Naive thymus-derived CD4-positive, alpha-beta T cell (primary cell): ENCODE measurements at regions of chr13 and their contacts with region 1.

Region 1: GRCh38 chr13:31044377-31045285 is 112.2 kb downstream of the TEX26 start:
- DNase-seq: peak; percentile 54 to 79 (median 75)
- ATAC-seq: peak; percentile 95
- H3K4me3 ChIP-seq: no peak overlapping the region
- H3K4me3 Mint-ChIP-seq: peak overlapping the region in 9 of 10 donors; percentile 19 to 81 (median 52)
- H3K27ac ChIP-seq: no peak overlapping the region
- H3K27ac Mint-ChIP-seq: peak overlapping the region in 5 of 9 donors; percentile 7 to 90 (median 46)
- H3K4me1 ChIP-seq: peaks cover 22 to 30% of the 10 kb centered on the region in 2 donors
- H3K4me1 Mint-ChIP-seq: peaks cover 22 to 52% (median 40%) of the 10 kb centered on the region in 7 donors
- H3K27me3 ChIP-seq: no peaks in the 10 kb centered on the region
- H3K27me3 Mint-ChIP-seq: peaks cover 0 to 24% (median 5%) of the 10 kb centered on the region in 5 donors

Region 2: GRCh38 chr13:30673669-30674521 is 370.7 kb before region 1 on chr13:
- CTCF ChIA-PET with region 1: no interaction called
- POLR2A ChIA-PET with region 1: no interaction called
- intact Hi-C with region 1: loop called (anchors 1 to 5 kb)
- DNase-seq: peak; percentile 79 to 94 (median 86)
- ATAC-seq: peak; percentile 97
- H3K4me3 ChIP-seq: peak overlapping the region; percentile 67
- H3K4me3 Mint-ChIP-seq: peak overlapping the region; percentile 72 to 90 (median 88)
- H3K27ac ChIP-seq: peak overlapping the region; percentile 38
- H3K27ac Mint-ChIP-seq: peak overlapping the region; percentile 81 to 98 (median 91)
- H3K4me1 ChIP-seq: peaks cover 0 to 5% of the 10 kb centered on the region in 2 donors
- H3K4me1 Mint-ChIP-seq: peaks cover 2 to 32% (median 15%) of the 10 kb centered on the region in 7 donors
- H3K27me3 ChIP-seq: no peaks in the 10 kb centered on the region
- H3K27me3 Mint-ChIP-seq: peaks cover 0 to 36% (median 0%) of the 10 kb centered on the region in 5 donors

Region 3: DNA sequence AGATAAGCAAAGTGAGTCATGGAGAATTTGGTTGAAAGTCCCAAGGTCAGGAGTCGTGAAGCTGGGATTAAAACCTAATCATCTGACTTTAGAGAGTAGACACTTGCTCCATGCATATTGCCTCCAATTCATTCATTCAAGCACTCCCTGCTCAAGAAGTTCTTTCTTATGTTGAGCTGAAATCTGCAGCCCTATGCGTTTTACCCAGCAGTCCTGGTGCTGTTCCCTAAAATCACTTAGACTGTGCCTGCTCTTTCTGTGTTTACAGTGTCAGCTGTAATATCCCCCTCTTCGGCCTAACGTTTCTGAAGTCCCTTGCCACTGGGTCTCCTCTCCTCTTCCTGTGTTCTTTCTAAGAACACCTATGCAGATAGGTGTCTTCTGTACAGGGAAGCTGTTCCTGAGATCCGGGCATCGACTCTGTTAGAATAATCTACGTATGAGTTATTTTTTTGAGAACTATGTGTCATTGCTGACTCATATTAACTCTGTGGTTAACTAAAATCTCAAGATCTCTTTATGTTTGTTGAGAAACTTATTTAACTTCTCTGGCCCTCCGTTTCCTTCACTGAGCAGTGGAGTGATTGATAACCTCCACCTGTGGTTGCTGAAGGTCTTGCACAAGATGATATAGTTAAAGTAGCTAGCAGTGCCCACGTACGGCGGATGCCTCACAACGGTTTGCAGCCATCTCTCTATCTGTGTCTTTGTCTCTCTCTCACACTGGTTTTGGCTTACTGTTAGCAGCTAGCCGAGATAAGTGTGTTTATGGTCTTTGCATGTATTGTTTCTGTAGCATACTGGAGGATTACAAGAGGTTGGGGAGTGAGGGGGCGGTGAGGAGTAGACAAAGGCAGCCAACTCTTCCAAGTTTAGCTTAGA is 304.6 kb before region 1 on chr13:
- CTCF ChIA-PET with region 1: no interaction called
- POLR2A ChIA-PET with region 1: no interaction called
- intact Hi-C with region 1: loop called in 1 of 2 experiments (anchors 10 kb)
- DNase-seq: peak in 8 of 9 donors; percentile 16 to 61 (median 32)
- ATAC-seq: peak; percentile 47
- H3K4me3 ChIP-seq: peak overlapping the region; percentile 29
- H3K4me3 Mint-ChIP-seq: peak overlapping the region; percentile 79 to 87 (median 82)
- H3K27ac ChIP-seq: no peak overlapping the region
- H3K27ac Mint-ChIP-seq: peak overlapping the region; percentile 7 to 93 (median 66)
- H3K4me1 ChIP-seq: peaks cover 59 to 60% of the 10 kb centered on the region in 2 donors
- H3K4me1 Mint-ChIP-seq: peaks cover 68 to 81% (median 79%) of the 10 kb centered on the region in 7 donors
- H3K27me3 ChIP-seq: no peaks in the 10 kb centered on the region
- H3K27me3 Mint-ChIP-seq: no peaks in the 10 kb centered on the region

Region 4: GRCh38 chr13:30978981-30979956 is 65.4 kb before region 1 on chr13:
- CTCF ChIA-PET with region 1: interaction called, 9 read pairs
- POLR2A ChIA-PET with region 1: no interaction called
- intact Hi-C with region 1: loop called (anchors 1 kb)
- DNase-seq: peak in 5 of 9 donors; percentile 1 to 56 (median 8)
- ATAC-seq: no peak
- H3K4me3 ChIP-seq: no peak overlapping the region
- H3K4me3 Mint-ChIP-seq: no peak overlapping the region
- H3K27ac ChIP-seq: no peak overlapping the region
- H3K27ac Mint-ChIP-seq: no peak overlapping the region
- H3K4me1 ChIP-seq: no peaks in the 10 kb centered on the region
- H3K4me1 Mint-ChIP-seq: peaks cover 0 to 1% (median 0%) of the 10 kb centered on the region in 7 donors
- H3K27me3 ChIP-seq: no peaks in the 10 kb centered on the region
- H3K27me3 Mint-ChIP-seq: peaks cover 4 to 25% (median 14%) of the 10 kb centered on the region in 5 donors

Region 5: GRCh38 chr13:31131470-31131961 is 86.9 kb after region 1 on chr13:
- CTCF ChIA-PET with region 1: no interaction called
- POLR2A ChIA-PET with region 1: no interaction called
- intact Hi-C with region 1: loop called in 1 of 2 experiments (anchors 10 kb)
- DNase-seq: peak in 2 of 9 donors; percentile 6 to 8
- ATAC-seq: peak; percentile 30
- H3K4me3 ChIP-seq: no peak overlapping the region
- H3K4me3 Mint-ChIP-seq: peak overlapping the region in 3 of 10 donors; percentile 29 to 43 (median 41)
- H3K27ac ChIP-seq: no peak overlapping the region
- H3K27ac Mint-ChIP-seq: peak overlapping the region in 4 of 9 donors; percentile 11 to 62 (median 42)
- H3K4me1 ChIP-seq: no peaks in the 10 kb centered on the region
- H3K4me1 Mint-ChIP-seq: peaks cover 3 to 43% (median 30%) of the 10 kb centered on the region in 7 donors
- H3K27me3 ChIP-seq: no peaks in the 10 kb centered on the region
- H3K27me3 Mint-ChIP-seq: peaks cover 8 to 23% (median 15%) of the 10 kb centered on the region in 5 donors